ENCODE measurements at regions of chr13 and their contacts with region 1.

Region 1: DNA sequence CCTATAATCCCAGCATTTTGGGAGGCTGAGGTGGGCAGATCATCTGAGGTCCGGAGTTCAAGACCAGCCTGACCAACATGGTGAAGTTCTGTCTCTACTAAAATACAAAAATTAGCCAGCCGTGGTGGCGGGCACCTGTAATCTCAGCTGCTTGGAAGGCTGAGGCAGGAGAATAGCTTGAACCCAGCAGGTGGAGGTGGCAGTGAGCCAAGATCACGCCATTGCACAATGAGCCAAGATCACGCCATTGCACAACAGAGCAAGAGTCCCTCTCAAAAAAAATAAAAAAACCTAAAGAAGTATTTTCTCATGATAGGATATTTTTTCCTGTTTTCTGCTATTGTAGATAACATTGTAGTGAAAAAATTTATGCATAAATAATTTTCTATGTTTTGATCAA is 13.3 kb downstream of the IFT88 start:
- DNase-seq: no peak
- ATAC-seq: no peak
- H3K4me3 ChIP-seq: no peak overlapping the region
- H3K4me3 Mint-ChIP-seq: no peak overlapping the region
- H3K27ac ChIP-seq: no peak overlapping the region
- H3K27ac Mint-ChIP-seq: no peak overlapping the region
- H3K4me1 ChIP-seq: no peaks in the 10 kb centered on the region
- H3K4me1 Mint-ChIP-seq: no peaks in the 10 kb centered on the region
- H3K27me3 ChIP-seq: no peaks in the 10 kb centered on the region
- H3K27me3 Mint-ChIP-seq: no peaks in the 10 kb centered on the region
- CTCF ChIP-seq: no peak

Region 2: DNA sequence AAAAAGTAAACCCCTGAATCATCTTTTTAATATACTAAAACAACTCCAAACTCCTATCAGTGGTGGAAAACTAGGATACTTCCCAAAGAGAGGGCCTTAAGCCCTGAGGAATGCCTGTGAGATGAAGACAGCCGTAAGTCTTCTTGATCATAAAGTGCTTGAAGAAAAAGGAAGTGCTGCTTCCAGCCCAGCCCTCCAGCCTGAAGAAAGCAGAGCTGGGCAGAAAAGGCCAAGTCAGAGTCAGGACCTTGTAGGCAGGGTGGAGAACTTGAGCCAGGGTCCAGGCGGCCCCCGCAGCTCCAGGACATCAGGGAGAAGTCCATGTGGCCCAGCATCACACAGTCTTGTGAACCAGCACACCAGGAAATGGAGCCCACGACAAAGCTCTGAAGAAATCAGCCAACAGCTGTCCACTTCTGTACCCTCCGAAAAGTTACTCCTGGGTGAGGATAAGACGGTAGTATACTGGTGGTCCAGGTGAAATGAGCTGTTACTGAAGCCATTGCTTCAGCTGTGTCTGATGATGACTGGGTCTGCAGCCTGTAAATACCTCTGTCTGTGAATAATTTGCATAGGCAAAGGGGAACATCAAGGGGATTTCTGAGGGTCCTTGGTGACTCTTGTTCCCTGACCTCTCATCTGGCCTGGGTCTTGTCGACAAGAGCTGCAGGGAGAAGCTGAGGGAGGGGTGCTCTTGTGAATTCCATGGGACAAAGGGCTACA is 35.9 kb before region 1 on chr13:
- CTCF ChIA-PET with region 1: no interaction called
- POLR2A ChIA-PET with region 1: no interaction called
- intact Hi-C with region 1: loop called in 1 of 2 experiments (anchors 5 kb)
- DNase-seq: no peak
- ATAC-seq: no peak
- H3K4me3 ChIP-seq: no peak overlapping the region
- H3K4me3 Mint-ChIP-seq: no peak overlapping the region
- H3K27ac ChIP-seq: no peak overlapping the region
- H3K27ac Mint-ChIP-seq: no peak overlapping the region
- H3K4me1 ChIP-seq: no peaks in the 10 kb centered on the region
- H3K4me1 Mint-ChIP-seq: peaks cover 9% of the 10 kb centered on the region
- H3K27me3 ChIP-seq: no peaks in the 10 kb centered on the region
- H3K27me3 Mint-ChIP-seq: no peaks in the 10 kb centered on the region
- CTCF ChIP-seq: no peak

Region 3: DNA sequence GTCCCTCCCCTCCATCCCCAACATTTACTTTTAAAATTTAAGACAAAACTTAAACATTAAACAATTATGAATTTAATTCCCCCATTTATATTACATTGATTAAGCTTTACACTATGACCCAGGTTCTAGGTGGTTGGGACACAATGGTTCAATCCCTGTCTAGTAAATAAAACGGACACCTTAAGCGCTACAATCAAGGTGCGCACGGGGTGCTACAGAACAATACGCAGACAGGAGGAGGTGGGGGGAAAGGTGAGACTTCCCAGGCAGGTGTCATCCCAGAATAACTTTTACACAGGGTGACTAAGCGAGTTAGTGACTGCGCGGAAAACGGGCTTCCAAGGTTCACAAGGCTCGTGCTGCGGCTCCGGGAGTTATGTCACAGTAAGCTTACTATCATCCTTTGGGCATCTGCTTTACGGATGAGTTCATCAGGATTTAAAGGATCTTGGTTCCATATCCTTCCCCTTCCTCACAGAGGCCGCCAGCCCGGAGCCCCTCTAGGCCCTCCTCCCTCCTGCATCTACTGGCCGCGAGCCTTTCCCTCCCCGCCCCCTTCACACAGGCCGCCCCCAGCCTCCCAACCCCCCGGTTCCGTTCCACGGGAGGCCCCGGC is 13.9 kb before region 1 on chr13:
- CTCF ChIA-PET with region 1: no interaction called
- POLR2A ChIA-PET with region 1: no interaction called
- intact Hi-C with region 1: no loop called
- DNase-seq: peak in 1 of 9 experiments; percentile 2
- ATAC-seq: no peak
- H3K4me3 ChIP-seq: peak overlapping the region; percentile 70 to 71
- H3K4me3 Mint-ChIP-seq: peak overlapping the region; percentile 87
- H3K27ac ChIP-seq: peak overlapping the region; percentile 70 to 77
- H3K27ac Mint-ChIP-seq: peak overlapping the region; percentile 89
- H3K4me1 ChIP-seq: no peaks in the 10 kb centered on the region
- H3K4me1 Mint-ChIP-seq: peaks cover 17% of the 10 kb centered on the region
- H3K27me3 ChIP-seq: no peaks in the 10 kb centered on the region
- H3K27me3 Mint-ChIP-seq: no peaks in the 10 kb centered on the region
- CTCF ChIP-seq: no peak

Region 4: DNA sequence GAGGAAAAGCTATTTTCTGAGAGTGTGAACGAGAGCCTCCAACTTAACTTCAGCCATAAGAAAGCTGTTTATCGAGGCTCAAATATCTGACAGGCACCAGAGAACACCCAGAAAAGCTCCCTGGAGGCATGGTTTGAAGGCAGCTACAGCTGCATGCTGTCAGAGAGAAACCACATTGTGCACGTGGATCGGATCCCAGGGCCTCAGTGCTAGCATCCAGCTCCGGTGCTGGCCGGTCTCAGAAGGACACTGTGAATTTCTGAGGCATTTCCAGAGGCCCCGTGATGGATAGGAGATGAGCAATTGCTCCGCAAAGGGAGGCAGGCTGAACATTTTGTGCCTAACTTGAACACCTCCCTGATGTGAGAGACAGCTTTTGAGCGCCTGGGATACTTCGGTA is 1406.3 kb after region 1 on chr13:
- CTCF ChIA-PET with region 1: no interaction called
- POLR2A ChIA-PET with region 1: no interaction called
- intact Hi-C with region 1: no loop called
- DNase-seq: no peak
- ATAC-seq: no peak
- H3K4me3 ChIP-seq: no peak overlapping the region
- H3K4me3 Mint-ChIP-seq: no peak overlapping the region
- H3K27ac ChIP-seq: no peak overlapping the region
- H3K27ac Mint-ChIP-seq: no peak overlapping the region
- H3K4me1 ChIP-seq: no peaks in the 10 kb centered on the region
- H3K4me1 Mint-ChIP-seq: no peaks in the 10 kb centered on the region
- H3K27me3 ChIP-seq: no peaks in the 10 kb centered on the region
- H3K27me3 Mint-ChIP-seq: no peaks in the 10 kb centered on the region
- CTCF ChIP-seq: no peak

Measured in CD8-positive, alpha-beta T cell (primary cell).